Sigmoid colon (tissue), 7 donors: ENCODE measurements at regions of chrX and their contacts with region 1.

Region 1: GRCh38 chrX:119468930-119469635 is 839 bp downstream of the SLC25A5 start:
- DNase-seq: peak; percentile 93
- H3K4me3 ChIP-seq: peak overlapping the region; percentile 73 to 80 (median 76)
- H3K27ac ChIP-seq: peak overlapping the region; percentile 96 to 99 (median 96)
- H3K4me1 ChIP-seq: peaks cover 0 to 12% (median 2%) of the 10 kb centered on the region in 4 donors
- H3K27me3 ChIP-seq: peaks cover 0 to 4% (median 0%) of the 10 kb centered on the region in 3 donors
- CTCF ChIP-seq: peak; percentile 26 to 63 (median 33)
- EP300 ChIP-seq: no peak
- POLR2A ChIP-seq: no peak

Region 2: DNA sequence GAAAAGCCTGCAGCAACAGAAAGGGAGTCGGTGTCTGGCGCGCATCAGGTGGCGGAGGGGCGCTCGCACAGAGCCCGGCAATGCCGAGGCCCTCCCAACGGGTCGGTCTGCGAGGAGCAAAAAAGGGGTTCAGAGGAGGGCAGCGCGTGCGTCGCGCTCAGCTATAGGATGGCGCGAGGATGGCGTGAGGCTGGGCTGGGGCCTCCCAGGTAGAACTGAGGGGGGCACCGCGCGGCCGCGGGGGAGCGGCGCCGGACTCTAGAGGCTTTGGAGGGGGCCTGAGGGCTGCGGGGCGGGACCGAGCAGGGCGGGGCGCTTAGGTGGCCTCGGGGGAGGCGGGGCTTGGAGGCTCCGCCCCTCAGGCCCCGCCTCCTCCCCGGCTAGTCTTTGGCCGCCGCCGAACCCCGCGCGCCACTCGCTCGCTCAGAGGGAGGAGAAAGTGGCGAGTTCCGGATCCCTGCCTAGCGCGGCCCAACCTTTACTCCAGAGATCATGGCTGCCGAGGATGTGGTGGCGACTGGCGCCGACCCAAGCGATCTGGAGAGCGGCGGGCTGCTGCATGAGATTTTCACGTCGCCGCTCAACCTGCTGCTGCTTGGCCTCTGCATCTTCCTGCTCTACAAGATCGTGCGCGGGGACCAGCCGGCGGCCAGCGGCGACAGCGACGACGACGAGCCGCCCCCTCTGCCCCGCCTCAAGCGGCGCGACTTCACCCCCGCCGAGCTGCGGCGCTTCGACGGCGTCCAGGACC is 233.0 kb before region 1 on chrX and contains the start of gene PGRMC1:
- intact Hi-C with region 1: loop called (anchors 5 kb)
- DNase-seq: peak; percentile 91
- H3K4me3 ChIP-seq: peak within 1 kb of the TSS; percentile 66 to 81 (median 72)
- H3K27ac ChIP-seq: peak within 1 kb of the TSS; percentile 81 to 90 (median 88)
- H3K4me1 ChIP-seq: peaks cover 0 to 14% (median 5%) of the 10 kb centered on the region in 4 donors
- H3K27me3 ChIP-seq: no peaks in the 10 kb centered on the region
- CTCF ChIP-seq: no peak
- EP300 ChIP-seq: no peak
- POLR2A ChIP-seq: peak; percentile 71 to 75
- total RNA-seq, gene PGRMC1: 104 to 159 (median 132) TPM

Region 3: DNA sequence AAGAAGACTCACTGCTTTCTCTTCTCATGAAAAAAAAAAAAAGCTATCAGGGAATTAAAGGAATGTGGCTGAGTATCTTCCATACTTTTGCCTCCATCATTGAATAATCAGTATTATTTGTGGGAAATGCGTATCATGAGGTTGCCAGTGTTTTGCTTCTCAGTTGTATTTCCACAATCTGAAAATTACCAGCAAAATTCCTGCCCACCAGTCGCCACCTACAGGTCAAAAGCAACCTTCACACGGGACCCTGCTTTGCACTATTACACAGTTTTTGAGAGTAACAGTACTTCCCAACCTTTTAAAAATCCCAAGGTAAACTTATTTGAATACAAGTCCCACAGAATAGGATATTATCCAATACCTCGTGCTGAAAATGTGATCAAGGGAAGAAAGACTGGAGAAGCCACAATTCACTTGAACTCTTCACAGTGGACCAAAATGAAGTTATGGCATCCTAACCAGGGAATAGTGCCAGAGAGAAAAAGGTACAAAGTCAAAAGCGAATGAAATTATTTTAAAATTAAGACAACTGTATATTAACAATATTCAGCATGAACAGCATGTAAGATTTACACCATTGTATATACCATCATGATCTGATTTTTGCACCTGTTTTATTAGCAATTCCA is 202.6 kb before region 1 on chrX:
- intact Hi-C with region 1: no loop called
- DNase-seq: no peak
- H3K4me3 ChIP-seq: no peak overlapping the region
- H3K27ac ChIP-seq: no peak overlapping the region
- H3K4me1 ChIP-seq: no peaks in the 10 kb centered on the region
- H3K27me3 ChIP-seq: no peaks in the 10 kb centered on the region
- CTCF ChIP-seq: peak in 3 of 4 experiments; percentile 20 to 58 (median 26)
- EP300 ChIP-seq: no peak
- POLR2A ChIP-seq: no peak

Region 4: DNA sequence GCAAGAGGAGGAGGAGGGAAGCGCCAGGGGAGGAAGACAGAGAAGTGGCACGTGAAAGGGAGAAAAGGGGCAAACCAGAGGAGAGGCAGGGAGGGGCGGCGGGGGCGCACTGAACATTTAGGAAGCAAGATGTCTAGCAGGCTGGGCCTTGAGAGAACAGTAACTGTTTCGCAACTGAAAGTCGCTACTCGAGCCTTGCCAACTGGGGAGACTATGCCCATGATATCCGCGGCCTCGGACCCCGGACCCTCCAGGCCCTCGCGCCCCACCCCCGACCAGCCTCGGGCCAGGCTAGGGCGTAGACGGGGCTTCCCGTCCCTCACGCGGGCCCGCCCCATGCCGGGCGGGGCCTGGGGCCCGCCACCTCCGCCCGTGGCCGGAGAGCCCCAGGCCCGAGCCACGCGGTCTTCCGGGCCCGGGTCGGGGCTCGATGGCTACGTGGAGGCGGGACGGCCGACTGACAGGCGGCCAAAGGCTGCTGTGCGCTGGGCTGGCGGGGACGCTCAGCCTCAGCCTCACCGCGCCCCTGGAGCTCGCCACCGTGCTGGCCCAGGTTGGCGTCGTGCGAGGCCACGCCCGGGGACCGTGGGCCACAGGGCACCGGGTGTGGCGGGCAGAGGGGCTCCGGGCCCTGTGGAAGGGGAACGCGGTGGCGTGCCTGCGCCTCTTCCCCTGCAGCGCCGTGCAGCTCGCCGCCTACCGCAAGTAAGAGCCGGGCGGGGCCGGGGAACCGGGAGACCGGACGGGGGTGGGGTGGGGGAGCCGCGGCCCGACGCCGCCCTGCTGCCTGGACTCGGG is 69.9 kb before region 1 on chrX and contains the start of gene SLC25A43:
- intact Hi-C with region 1: loop called (anchors 2 kb)
- DNase-seq: peak; percentile 76
- H3K4me3 ChIP-seq: peak within 1 kb of the TSS; percentile 44 to 73 (median 67)
- H3K27ac ChIP-seq: peak within 1 kb of the TSS; percentile 81 to 90 (median 82)
- H3K4me1 ChIP-seq: peaks cover 0 to 8% (median 0%) of the 10 kb centered on the region in 4 donors
- H3K27me3 ChIP-seq: no peaks in the 10 kb centered on the region
- CTCF ChIP-seq: no peak
- EP300 ChIP-seq: no peak
- POLR2A ChIP-seq: no peak
- total RNA-seq, gene SLC25A43: 5.3 to 16.1 (median 9.7) TPM

Region 5: GRCh38 chrX:119482481-119483480 is 13.7 kb after region 1 on chrX:
- intact Hi-C with region 1: loop called (anchors 2 kb)
- DNase-seq: peak; percentile 74
- H3K4me3 ChIP-seq: peak overlapping the region; percentile 14 to 48 (median 44)
- H3K27ac ChIP-seq: peak overlapping the region; percentile 58 to 68 (median 63)
- H3K4me1 ChIP-seq: peaks cover 0 to 8% (median 0%) of the 10 kb centered on the region in 4 donors
- H3K27me3 ChIP-seq: no peaks in the 10 kb centered on the region
- CTCF ChIP-seq: peak; percentile 29 to 69 (median 36)
- EP300 ChIP-seq: no peak
- POLR2A ChIP-seq: no peak

Region 6: GRCh38 chrX:120014354-120015130 is 545.5 kb after region 1 on chrX:
- intact Hi-C with region 1: no loop called
- DNase-seq: no peak
- H3K4me3 ChIP-seq: peak overlapping the region in 2 of 4 donors; percentile 30 to 34
- H3K27ac ChIP-seq: no peak overlapping the region
- H3K4me1 ChIP-seq: peaks cover 0 to 12% (median 10%) of the 10 kb centered on the region in 4 donors
- H3K27me3 ChIP-seq: peaks cover 0 to 40% (median 21%) of the 10 kb centered on the region in 3 donors
- CTCF ChIP-seq: no peak
- EP300 ChIP-seq: no peak
- POLR2A ChIP-seq: no peak